ENCODE measurements at regions of chr1 and their contacts with region 1.

Region 1: DNA sequence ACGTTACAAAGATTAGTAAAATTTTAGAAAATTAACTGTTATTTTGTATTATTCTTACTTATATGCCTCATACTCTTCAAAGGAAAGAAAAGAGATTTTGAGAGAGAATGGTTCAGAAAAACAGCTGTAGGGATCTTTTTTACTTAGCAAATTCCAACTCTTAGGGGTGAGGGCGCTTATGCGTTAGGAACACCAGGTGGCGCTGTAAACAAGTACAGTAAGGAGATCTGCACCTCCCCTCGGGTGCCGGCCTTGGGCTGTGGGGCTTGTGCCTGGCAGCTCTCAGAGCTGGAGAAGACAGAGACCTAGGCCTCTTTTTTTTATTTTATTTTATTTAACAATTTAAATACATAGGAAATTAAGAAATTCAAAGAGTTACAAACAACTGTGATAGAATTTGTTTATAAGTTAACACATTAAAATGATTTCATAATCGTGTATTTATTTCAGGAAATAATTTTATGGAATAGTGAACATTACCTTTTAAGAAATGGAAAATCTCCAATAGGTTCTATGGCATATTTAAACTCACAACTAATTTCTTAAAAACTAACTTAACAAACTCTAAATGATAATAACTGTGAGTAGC is 32.6 kb downstream of the UTP25 start:
- DNase-seq: peak; percentile 94
- ATAC-seq: peak; percentile 96
- H3K4me3 ChIP-seq: no peak overlapping the region
- H3K27ac ChIP-seq: no peak overlapping the region
- H3K4me1 ChIP-seq: peaks cover 4% of the 10 kb centered on the region; the same call in 1 of the 2 replicates
- H3K27me3 ChIP-seq: no peaks in the 10 kb centered on the region
- CTCF ChIP-seq: peak; percentile 93

Region 2: GRCh38 chr1:209743145-209743482 is 117.3 kb before region 1 on chr1:
- CTCF ChIA-PET with region 1: no interaction called
- POLR2A ChIA-PET with region 1: no interaction called
- intact Hi-C with region 1: no loop called
- DNase-seq: peak; percentile 74
- ATAC-seq: no peak
- H3K4me3 ChIP-seq: no peak overlapping the region
- H3K27ac ChIP-seq: no peak overlapping the region
- H3K4me1 ChIP-seq: peaks cover 20% of the 10 kb centered on the region
- H3K27me3 ChIP-seq: no peaks in the 10 kb centered on the region
- CTCF ChIP-seq: no peak

Region 3: DNA sequence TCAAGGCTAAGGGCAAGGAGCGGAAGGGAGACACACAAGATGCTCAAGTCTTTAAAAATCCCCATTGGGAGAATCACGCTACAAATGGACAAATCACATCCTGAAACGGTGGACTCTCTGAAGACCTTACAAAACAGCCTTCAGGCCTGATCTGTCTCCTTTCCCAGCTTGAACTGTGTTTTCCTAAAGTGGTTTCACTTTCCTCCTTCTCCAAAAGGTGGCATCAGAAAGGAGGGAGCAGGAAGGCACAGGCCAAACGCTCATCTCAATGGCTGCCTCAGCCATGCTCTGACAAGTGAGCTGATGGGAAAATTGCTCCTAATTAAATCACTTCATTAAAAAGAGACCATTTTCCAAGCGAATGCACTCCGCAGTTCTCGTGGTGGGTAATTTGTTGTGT is 15.1 kb after region 1 on chr1:
- CTCF ChIA-PET with region 1: interaction called, 8 read pairs
- POLR2A ChIA-PET with region 1: interaction called, 3 read pairs
- intact Hi-C with region 1: loop called (anchors 2 kb)
- DNase-seq: peak; percentile 72
- ATAC-seq: peak; percentile 47
- H3K4me3 ChIP-seq: no peak overlapping the region
- H3K27ac ChIP-seq: no peak overlapping the region
- H3K4me1 ChIP-seq: peaks cover 46% of the 10 kb centered on the region
- H3K27me3 ChIP-seq: no peaks in the 10 kb centered on the region
- CTCF ChIP-seq: peak; percentile 78

Region 4: GRCh38 chr1:209886219-209886536 is 25.8 kb after region 1 on chr1:
- CTCF ChIA-PET with region 1: interaction called, 4 read pairs
- POLR2A ChIA-PET with region 1: no interaction called
- intact Hi-C with region 1: loop called (anchors 1 kb)
- DNase-seq: peak; percentile 58
- ATAC-seq: no peak
- H3K4me3 ChIP-seq: no peak overlapping the region
- H3K27ac ChIP-seq: no peak overlapping the region
- H3K4me1 ChIP-seq: peaks cover 41% of the 10 kb centered on the region
- H3K27me3 ChIP-seq: no peaks in the 10 kb centered on the region
- CTCF ChIP-seq: peak; percentile 73

Region 5: GRCh38 chr1:209937996-209938959 is 77.9 kb after region 1 on chr1 and contains the start of gene SYT14:
- CTCF ChIA-PET with region 1: no interaction called
- POLR2A ChIA-PET with region 1: no interaction called
- intact Hi-C with region 1: loop called (anchors 5 kb)
- DNase-seq: peak; percentile 63
- ATAC-seq: peak; percentile 82
- H3K4me3 ChIP-seq: peak within 1 kb of the TSS; percentile 65
- H3K27ac ChIP-seq: no peak within 1 kb of the TSS
- H3K4me1 ChIP-seq: 0 out of 2 replicates have a peak, but pooled peaks cover 9% of the 10 kb centered on the region
- H3K27me3 ChIP-seq: peaks cover 40% of the 10 kb centered on the region
- CTCF ChIP-seq: peak; percentile 29; the same call in 1 of the 2 replicates
- total RNA-seq, gene SYT14: 3.5 and 5.2 TPM in 2 replicates

Region 6: GRCh38 chr1:210104103-210104502 is 243.7 kb after region 1 on chr1:
- CTCF ChIA-PET with region 1: no interaction called
- POLR2A ChIA-PET with region 1: no interaction called
- intact Hi-C with region 1: no loop called
- DNase-seq: no peak
- ATAC-seq: no peak
- H3K4me3 ChIP-seq: no peak overlapping the region
- H3K27ac ChIP-seq: no peak overlapping the region
- H3K4me1 ChIP-seq: no peaks in the 10 kb centered on the region
- H3K27me3 ChIP-seq: no peaks in the 10 kb centered on the region
- CTCF ChIP-seq: no peak

Region 7: DNA sequence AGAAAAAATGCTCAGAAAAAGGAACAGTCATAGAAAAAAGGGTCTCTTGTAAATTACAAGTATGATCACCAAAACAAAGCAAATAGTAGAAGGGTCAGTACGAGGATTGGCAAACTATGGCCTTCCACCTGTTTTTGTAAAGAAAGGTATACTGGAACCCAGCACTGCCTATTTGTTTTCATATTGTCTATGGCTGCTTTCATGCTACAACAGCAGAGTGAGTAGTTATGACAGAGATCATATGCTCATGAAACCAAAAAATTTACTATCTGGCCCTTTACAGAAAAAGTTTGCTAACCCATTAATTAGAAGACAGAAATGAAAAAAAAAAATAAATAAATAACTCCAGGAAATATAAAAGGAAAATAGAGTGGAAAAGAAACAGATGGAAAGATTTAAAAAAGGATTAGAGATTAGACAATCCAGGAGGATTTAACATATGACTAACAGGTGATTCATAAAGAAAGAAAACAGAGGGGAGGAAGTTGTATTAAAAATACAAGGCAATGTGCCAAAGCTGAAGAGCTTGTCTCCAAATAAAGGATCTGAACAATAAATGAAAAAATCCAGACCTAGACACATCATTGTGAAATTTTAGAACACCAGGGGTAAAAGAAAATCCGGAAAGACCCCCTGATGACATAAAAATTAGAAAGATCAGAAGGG is 263.7 kb after region 1 on chr1:
- CTCF ChIA-PET with region 1: no interaction called
- POLR2A ChIA-PET with region 1: no interaction called
- intact Hi-C with region 1: loop called (anchors 10 kb)
- DNase-seq: peak; percentile 91
- ATAC-seq: peak; percentile 83
- H3K4me3 ChIP-seq: no peak overlapping the region
- H3K27ac ChIP-seq: no peak overlapping the region
- H3K4me1 ChIP-seq: peaks cover 13% of the 10 kb centered on the region
- H3K27me3 ChIP-seq: no peaks in the 10 kb centered on the region
- CTCF ChIP-seq: no peak

Region 8: DNA sequence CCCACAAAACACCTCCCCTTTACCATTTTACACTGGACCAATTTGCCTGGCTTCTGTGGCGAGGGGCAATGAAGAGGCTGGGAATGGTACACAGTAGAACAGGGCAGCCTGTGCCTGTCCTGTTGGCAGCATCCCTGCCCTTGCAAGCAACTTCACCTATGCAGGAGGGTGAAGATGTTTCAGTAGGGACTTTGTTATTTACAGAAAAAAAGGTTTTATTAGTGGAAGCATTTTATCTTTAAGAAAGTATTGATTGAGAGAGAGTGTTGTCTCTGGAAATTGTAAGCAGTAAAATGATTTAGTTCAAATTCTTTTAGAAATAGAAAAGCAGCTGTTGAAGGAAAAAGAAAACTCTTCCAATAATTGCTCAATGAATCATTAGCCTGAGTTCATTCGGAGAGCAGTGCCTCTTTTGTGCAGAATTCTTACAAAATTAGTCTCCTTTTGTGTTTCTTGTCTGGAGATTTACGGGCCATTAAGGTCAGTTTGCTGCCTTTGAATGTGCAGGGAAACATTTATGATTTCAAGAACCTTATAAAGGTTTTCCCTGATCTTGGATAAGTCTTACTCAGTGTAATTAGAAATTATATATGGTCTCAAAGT is 517.4 kb after region 1 on chr1:
- CTCF ChIA-PET with region 1: no interaction called
- POLR2A ChIA-PET with region 1: no interaction called
- intact Hi-C with region 1: no loop called
- DNase-seq: peak; percentile 33
- ATAC-seq: no peak
- H3K4me3 ChIP-seq: no peak overlapping the region
- H3K27ac ChIP-seq: no peak overlapping the region
- H3K4me1 ChIP-seq: peaks cover 33% of the 10 kb centered on the region
- H3K27me3 ChIP-seq: no peaks in the 10 kb centered on the region
- CTCF ChIP-seq: no peak

Measured in PC-3 (cell line).